ENCODE measurements at regions of chr1 and their contacts with region 1.

Region 1: DNA sequence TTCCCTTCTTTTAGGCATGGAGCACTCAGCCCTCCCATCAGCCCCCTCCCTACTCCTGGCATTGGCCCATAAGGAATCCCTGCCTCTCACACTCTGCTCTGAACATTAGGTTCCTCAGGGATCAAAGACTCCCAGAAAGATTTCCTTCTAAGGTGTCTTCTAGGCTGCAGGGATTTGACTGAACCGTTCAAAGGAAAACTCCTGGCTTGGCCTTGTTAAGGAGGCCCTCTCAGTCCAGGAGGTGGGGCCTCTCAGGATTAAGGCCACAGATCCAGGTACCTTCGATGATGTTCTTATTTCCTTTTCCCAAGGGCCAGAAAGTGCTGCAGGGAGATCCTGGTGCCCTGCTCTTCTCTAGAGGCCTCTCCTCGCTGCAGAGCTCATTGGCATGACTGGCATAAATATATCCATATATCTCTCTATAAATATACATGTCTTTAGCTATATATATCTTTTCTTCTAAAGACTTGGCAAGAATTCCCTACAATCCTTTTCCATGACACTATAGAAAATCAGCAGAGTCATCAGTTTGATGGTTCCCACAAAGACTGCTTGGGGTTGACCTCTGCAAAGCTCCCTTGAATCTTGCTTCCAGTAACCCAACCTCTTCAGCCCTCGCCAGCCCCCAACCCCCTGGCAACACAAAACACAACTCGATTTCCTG is 59.1 kb downstream of the PLXNA2 start:
- DNase-seq: no peak
- H3K4me3 ChIP-seq: no peak overlapping the region
- H3K27ac ChIP-seq: no peak overlapping the region
- H3K4me1 ChIP-seq: no peaks in the 10 kb centered on the region
- H3K27me3 ChIP-seq: no peaks in the 10 kb centered on the region
- CTCF ChIP-seq: no peak
- POLR2A ChIP-seq: no peak

Region 2: GRCh38 chr1:208137193-208137592 is 47.9 kb before region 1 on chr1:
- intact Hi-C with region 1: loop called (anchors 1 kb)
- DNase-seq: no peak
- H3K4me3 ChIP-seq: no peak overlapping the region
- H3K27ac ChIP-seq: no peak overlapping the region
- H3K4me1 ChIP-seq: no peaks in the 10 kb centered on the region
- H3K27me3 ChIP-seq: no peaks in the 10 kb centered on the region
- CTCF ChIP-seq: no peak
- POLR2A ChIP-seq: no peak